ENCODE measurements at regions of chr1 and their contacts with region 1.

Region 1: DNA sequence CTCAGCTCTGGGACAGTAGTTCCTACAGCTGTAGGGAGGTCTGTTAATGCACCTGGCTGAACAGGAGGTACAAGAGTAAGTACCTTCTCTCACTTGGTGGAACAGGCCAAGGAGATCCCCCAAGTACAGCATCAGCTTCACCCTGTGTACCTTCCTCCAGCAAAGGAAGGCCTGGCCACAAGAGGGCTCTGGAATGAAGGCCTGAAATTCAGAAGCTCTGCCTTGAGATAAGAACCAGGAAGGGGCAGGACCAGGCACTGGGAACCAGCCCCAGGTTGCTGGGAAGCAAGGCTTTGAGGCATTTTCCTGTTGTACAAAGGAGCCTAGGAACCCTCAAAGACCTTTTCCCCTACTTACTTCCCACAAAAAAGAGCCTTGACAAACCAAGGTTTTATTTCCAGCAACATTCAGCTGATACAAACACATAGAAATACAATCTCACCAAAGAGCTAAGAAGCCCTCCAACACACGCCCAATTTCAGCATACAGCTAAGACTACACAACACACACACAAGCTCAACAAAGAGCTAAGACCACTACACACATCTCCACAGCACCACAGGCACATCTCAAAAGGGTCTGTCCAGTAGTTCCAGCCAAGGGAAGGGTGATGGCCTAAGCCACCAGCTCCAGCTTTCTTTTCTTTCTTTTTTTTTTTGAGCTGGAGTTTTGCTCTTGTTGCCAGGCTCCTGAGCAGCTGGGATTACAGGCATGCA is 23.5 kb downstream of the F11R start:
- ATAC-seq: peak; percentile 45 to 91 (median 76)
- H3K4me3 ChIP-seq: no peak overlapping the region
- H3K27ac ChIP-seq: no peak overlapping the region
- H3K4me1 ChIP-seq: no peaks in the 10 kb centered on the region

Region 2: DNA sequence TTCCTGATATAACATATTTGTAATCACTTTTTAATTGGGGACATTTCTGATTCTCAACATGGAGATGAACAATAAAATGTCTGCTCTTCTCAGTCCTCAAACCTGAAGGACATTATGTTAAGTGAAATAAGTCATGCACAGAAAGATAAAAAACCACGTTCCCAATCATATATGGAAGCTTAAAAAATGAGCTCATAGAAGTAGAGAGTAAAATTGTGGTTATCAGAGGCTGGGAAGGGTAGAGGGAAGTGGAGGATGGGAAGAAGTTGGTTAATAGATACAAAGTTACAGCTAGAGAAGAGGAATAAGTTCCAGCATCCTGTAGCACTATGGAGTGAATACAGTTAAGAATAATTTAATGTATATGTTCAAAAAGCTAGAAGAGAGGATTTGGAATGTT is 284.3 kb before region 1 on chr1:
- in situ Hi-C with region 1: no loop called
- ATAC-seq: no peak
- H3K4me3 ChIP-seq: no peak overlapping the region
- H3K27ac ChIP-seq: no peak overlapping the region
- H3K4me1 ChIP-seq: no peaks in the 10 kb centered on the region

Region 3: DNA sequence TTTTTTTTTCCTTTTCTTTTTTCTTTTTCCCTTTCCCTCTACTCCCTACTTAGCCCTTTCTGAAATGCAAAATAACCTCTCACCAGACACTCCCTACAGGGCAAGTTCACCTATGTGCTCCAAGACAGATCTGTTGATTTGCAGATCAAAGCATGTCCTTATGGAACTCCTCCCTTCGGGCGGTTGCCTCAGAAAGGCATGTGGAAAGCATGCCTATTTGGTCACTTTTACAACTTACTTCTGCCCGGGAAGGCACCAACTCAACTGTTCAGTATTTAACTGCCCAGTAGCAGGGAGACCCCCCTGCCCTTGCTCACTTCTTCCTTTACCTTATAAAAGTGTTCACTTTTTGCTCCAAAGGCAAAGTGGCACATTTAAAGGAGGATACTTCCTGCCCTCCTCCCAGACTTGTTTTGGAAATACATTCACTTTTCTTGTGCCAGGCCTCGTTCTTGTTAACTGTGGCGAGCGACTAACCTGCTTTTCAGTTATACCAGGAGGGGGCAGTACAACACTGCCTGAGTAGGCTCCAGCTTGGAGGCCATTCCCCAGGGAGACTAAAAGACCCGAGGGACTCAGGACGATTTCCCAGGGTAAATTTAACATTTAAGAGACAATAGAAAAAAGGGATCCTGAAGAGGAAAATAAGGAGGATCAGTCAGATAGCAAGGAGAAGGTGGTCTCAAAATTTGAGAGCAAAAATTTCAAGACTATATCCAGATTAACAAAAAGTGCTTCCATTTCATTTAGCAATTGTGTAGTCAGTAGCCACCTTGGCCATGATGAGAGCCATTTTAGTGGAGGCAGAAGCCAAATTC is 270.8 kb before region 1 on chr1:
- in situ Hi-C with region 1: loop called in 1 of 9 experiments (anchors 25 kb)
- ATAC-seq: peak; percentile 60 to 93 (median 82)
- H3K4me3 ChIP-seq: no peak overlapping the region
- H3K27ac ChIP-seq: no peak overlapping the region
- H3K4me1 ChIP-seq: peaks cover 0 to 7% of the 10 kb centered on the region in 2 donors

Region 4: DNA sequence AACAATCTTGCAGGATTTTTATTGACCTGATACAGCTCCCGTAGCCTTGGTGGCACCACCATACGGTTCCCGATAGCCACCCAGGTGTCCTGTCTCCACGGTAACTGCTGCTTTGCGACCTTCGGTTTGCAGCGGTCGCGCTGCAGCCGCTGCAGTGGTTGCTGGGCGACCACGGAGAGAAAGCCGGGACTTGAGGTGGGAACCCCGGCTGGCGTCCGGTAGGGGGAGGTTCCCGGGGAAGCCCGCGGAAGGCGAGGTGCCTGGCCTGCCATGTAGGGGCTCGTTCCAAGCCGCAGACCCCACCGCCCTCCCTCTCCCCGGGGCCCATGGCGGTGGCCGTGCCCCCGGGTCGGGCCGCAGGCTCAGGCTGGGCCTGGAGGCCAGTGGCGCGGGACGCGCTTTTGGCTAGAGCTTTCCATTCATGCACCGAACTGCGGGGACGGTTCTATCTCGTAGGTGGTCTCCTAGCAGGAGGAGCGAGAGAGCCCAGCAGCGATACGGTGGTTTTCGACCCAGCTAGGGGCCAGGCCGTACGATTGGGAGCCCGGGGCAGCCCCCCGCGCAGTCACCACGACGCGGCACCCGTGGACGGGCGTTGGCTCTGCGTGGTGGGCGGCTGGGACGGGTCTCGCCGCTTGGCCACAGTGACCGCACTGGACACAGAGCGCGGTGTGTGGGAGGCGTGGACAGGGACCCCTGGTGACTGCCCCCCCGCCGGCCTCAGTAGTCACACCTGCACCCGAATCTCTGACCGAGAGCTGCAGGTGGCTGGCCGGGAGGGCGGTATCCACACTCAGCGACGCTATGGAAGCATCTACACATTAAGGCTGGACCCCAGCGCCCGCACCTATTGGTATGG is 101.0 kb after region 1 on chr1 and contains the start of gene KLHDC9:
- in situ Hi-C with region 1: loop called in 1 of 9 experiments (anchors 25 kb)
- ATAC-seq: peak; percentile 51 to 95 (median 93)
- H3K4me3 ChIP-seq: peak within 1 kb of the TSS; percentile 60 to 72 (median 71)
- H3K27ac ChIP-seq: peak within 1 kb of the TSS; percentile 58
- H3K4me1 ChIP-seq: peaks cover 2 to 9% of the 10 kb centered on the region in 2 donors
- total RNA-seq, gene KLHDC9: 1.5 to 38.5 (median 30.0) TPM in 7 of 8 experiments, not detected in the other